AG04449 (cell line): ENCODE measurements at regions of chr6 and their contacts with region 1.

Region 1: DNA sequence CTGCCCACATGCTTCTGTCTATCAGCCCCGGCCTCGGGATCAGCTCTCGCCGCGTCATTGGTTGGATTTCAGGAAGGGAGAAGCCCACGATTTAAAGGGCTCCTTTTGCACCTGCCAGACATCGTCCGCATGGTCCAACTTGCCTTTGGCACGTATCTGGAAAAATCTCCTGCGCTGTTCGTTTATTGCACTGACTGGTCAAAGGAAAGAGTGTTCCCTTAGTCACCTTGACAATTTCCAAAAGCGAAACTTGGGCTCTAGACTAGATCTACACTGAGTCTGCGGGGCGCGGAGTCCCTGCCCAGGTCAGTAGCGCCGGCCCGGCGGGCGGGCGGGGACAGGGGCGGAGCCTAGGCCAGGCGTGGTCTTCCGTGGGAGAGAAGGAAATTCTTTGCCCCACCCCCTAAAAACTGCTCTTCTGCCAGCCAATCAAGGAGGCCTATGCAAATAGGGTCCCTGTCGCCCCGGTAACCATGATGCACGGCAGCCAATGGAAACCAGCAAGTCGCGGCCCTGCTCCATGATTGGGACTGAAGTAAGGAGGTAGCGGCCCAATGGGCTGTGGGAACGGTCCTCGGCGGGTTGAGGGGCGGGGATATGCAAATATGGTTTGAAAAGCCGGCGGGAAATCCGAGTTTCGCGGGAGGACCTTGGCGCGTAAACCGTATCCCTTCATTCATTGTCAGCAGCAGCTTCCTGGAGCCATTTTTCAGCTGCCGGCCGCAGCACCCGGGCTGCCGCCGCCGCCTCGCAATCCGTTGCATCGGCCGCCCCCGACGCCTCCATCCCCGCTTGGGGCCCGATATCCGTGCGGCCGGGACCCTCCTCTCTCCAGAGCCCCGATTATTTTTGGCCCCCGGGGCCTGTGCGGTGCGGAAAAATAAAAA is at the start of gene E2F3:
- DNase-seq: peak; percentile 99
- H3K4me3 ChIP-seq: peak within 1 kb of the TSS; percentile 78
- CTCF ChIP-seq: no peak

Region 2: GRCh38 chr6:20415712-20416454 is 14.4 kb after region 1 on chr6:
- CTCF ChIA-PET with region 1: interaction called, 18 read pairs
- POLR2A ChIA-PET with region 1: no interaction called
- DNase-seq: no peak
- H3K4me3 ChIP-seq: no peak overlapping the region
- CTCF ChIP-seq: no peak